Activated T-helper 1 cell treated with anti-CD3 and anti-CD28 coated beads, Interleukin-12 subunit alpha, Interleukin-12 subunit beta, Interleukin-2, Interleukin-4 antibody, amounts not matched to agents 30 ng/mL and 10 ng/mL and 1 ng/mL, durations not matched to agents 14 hours and 24 hours and 36 hours (primary cell): ENCODE measurements at regions of chr7 and their contacts with region 1.

Region 1: DNA sequence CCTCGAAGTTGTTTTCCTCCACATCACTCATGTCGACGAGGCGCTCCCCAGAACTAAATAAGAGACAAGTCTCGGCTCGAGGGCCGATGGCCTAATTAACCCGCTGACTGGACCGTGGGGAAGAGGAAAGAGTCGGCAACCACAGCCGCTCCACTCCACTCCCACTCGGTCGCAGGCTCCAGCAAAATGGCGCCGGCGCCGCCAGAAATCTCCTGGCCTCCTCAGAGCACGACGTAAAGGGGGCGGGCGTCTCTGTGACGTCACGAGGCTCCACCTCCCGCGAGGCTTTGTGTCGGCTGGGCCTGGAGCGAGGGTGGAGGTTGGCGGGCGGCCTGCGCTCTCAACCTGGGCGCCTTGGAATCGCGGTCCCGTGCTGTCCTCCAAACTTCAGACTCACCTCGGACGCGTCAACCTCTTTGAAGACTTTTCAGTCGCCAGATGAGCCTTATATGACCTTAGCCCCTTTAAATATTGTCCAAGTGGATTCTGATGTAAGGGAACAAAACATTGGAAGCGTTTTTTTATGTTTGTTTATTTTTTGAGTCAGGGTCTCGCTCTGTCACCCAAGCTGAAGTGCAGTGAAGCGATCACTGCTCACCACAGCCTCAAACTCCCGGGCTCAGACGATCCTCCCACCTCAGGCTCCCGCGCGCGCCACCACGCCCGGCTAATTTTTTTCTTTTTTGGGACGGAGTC is at the start of gene TRA2A:
- DNase-seq: peak; percentile 95
- H3K4me3 Mint-ChIP-seq: peak within 1 kb of the TSS; percentile 99
- H3K27ac Mint-ChIP-seq: peak within 1 kb of the TSS; percentile 100
- H3K4me1 Mint-ChIP-seq: peaks cover 41% of the 10 kb centered on the region
- H3K27me3 Mint-ChIP-seq: no peaks in the 10 kb centered on the region
- total RNA-seq, gene TRA2A: 98.6 and 103 TPM in 2 replicates

Region 2: DNA sequence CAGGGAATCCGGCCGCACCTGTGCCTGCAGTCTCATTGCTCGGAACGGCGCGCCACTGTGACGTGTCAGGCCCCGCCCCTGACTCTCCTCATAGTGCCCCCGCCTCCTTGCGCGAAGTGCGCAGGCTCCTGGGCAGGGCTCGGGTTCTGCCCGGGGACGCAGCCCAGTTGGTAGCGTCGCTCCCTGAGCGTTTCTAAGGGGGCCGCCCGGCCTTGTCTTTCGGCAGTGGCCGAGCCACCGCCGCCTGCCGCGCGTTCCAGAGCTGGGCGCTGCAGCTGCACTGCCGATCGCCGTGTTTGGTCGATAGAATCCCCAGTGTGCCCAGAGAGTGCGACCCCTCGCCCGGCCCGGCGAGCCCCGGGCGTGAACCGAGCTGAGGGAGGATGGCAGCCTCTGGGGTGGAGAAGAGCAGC is 426.3 kb before region 1 on chr7 and contains the start of gene KLHL7:
- intact Hi-C with region 1: loop called (anchors 5 kb)
- DNase-seq: peak; percentile 95
- H3K4me3 Mint-ChIP-seq: peak within 1 kb of the TSS; percentile 94
- H3K27ac Mint-ChIP-seq: peak within 1 kb of the TSS; percentile 96
- H3K4me1 Mint-ChIP-seq: peaks cover 30% of the 10 kb centered on the region
- H3K27me3 Mint-ChIP-seq: no peaks in the 10 kb centered on the region
- total RNA-seq, gene KLHL7: 18.2 and 19.7 TPM in 2 replicates

Region 3: GRCh38 chr7:23298885-23299769 is 232.8 kb before region 1 on chr7 and contains the start of gene MALSU1:
- intact Hi-C with region 1: loop called (anchors 1 kb)
- DNase-seq: peak; percentile 93
- H3K4me3 Mint-ChIP-seq: peak within 1 kb of the TSS; percentile 88
- H3K27ac Mint-ChIP-seq: peak within 1 kb of the TSS; percentile 88
- H3K4me1 Mint-ChIP-seq: peaks cover 38% of the 10 kb centered on the region
- H3K27me3 Mint-ChIP-seq: peaks cover 4% of the 10 kb centered on the region
- total RNA-seq, gene MALSU1: 92.3 and 92.8 TPM in 2 replicates

Region 4: DNA sequence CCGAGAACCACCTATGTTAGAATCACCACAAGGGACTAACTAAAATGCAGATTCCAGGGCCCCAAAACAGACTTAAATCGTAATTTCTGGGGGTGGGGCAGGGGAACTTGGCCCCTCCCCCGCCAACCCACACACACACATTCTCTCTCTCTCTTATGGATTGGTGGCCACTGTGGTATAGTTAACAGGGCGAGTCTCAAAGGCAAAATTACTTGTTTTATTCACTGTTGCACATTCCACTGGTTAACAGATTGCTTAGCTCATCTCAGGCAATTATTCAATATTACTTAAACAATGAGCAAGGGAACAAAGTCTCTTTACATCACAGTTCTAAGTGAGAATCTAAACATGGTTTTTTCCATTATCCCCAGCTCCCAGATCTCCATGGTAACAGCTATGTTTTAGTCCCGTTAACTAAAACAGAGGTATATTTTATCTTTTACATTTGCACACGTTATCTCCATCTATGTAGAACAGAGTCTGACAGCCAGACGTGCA is 100.2 kb before region 1 on chr7:
- intact Hi-C with region 1: loop called (anchors 5 kb)
- DNase-seq: no peak
- H3K4me3 Mint-ChIP-seq: no peak overlapping the region
- H3K27ac Mint-ChIP-seq: no peak overlapping the region
- H3K4me1 Mint-ChIP-seq: peaks cover 4% of the 10 kb centered on the region
- H3K27me3 Mint-ChIP-seq: peaks cover 25% of the 10 kb centered on the region

Region 5: DNA sequence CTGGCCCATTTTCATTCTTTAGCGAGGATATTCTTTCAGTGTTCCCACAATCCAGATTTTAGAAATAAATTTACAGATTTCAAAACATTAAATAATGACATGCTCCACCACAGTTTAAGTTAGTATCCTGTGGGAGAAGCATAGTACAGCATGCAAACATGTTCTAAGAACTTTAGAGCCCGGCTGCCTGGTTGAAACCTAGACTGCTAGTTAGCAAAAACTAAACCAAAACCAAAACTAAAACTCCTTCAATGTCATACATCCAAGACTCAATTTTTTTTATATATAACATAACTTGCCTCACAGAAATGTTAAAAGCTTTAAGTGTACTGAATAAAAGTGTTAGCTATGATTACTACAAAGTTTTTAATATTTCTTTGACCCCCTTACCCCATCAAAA is 17.2 kb before region 1 on chr7:
- intact Hi-C with region 1: loop called (anchors 2 kb)
- DNase-seq: no peak
- H3K4me3 Mint-ChIP-seq: no peak overlapping the region
- H3K27ac Mint-ChIP-seq: peak overlapping the region; percentile 82
- H3K4me1 Mint-ChIP-seq: peaks cover 16% of the 10 kb centered on the region
- H3K27me3 Mint-ChIP-seq: no peaks in the 10 kb centered on the region

Region 6: DNA sequence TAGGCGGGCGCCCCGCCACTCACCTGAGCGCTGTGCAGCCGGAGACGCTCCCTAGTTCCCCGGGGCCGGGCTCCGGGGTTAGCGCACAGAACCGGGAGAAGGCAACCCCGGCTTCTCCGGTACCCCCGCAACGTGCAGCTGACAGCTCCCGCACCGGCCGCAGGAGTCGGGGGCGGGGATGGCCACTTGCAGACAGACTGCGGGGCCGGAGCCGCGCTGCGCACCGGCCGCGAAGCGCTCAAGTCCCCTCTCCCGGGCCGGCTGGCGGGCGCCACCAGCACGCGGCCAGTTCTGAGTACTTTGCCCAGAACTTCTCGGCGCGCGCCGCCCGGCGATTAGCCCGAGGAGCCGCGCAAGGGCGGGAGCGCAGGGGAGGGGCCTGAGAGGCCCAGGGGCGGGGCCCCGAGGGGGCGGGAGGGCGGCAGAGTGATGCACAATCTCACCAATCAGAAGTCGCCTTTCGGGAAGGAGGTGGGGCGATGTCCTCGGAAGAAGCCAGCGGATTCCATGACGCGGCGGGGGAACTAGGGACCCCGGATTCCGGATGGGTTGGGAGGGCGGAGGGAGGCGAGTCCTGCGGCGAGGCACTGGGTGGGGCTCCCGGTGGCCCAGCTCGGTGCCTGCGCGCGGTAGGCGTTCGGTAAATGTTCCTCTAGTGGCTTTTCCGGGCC is 1448.1 kb after region 1 on chr7 and contains the start of gene OSBPL3:
- intact Hi-C with region 1: loop called (anchors 5 kb)
- DNase-seq: peak; percentile 91
- H3K4me3 Mint-ChIP-seq: peak within 1 kb of the TSS; percentile 96
- H3K27ac Mint-ChIP-seq: peak within 1 kb of the TSS; percentile 96
- H3K4me1 Mint-ChIP-seq: peaks cover 58% of the 10 kb centered on the region
- H3K27me3 Mint-ChIP-seq: peaks cover 2% of the 10 kb centered on the region
- total RNA-seq, gene OSBPL3: 90.6 and 101 TPM in 2 replicates